ENCODE measurements at regions of chr19 and their contacts with region 1.

Region 1: DNA sequence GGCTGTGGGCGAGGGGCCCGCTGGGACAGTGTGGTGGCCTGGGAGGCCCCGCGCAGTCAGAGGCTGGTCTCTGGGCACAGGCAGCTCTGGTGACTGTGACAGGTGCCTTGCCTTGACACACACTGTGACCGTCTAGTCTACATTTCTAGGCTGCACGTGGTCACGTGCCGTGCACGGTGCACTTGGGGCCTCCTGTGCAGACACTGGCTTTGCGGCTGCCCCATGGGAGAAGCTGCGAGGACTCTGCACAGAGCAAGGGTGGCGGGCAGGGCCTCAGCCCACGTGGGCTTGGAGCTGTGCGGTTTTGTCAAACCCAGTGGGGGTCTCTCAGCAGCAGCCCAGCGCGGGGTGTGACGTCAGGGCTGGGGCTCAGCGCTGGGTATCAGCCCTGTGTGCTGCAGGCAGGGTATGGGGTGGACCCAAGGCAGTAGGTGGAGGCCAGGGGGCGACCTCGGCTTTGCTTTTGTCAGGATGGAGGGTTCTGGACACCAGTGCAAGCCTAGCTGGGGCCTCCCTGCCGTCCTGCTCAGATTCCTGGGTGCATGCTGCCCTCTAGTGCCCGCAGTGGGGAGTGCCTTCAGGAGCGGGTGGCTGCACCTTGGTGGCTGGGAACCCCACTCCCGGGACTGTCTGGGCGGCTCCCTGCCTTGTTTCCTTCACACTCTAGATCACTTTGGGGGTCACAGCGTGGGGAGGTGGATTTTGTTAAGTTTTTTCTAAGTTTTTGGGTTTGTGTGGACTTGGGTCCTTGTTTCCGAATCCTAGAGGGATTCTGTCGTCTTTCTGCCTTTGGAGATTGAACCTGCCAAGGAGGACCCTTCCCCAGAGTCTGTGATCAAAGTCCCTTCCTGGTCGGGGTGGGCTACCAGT is 62.6 kb downstream of the KDM4B start:
- DNase-seq: peak; percentile 58 to 86 (median 74)
- ATAC-seq: peak; percentile 91
- H3K4me3 ChIP-seq: no peak overlapping the region
- H3K4me3 Mint-ChIP-seq: no peak overlapping the region
- H3K27ac ChIP-seq: no peak overlapping the region
- H3K27ac Mint-ChIP-seq: peak overlapping the region in 1 of 9 donors; percentile 49
- H3K4me1 ChIP-seq: no peaks in the 10 kb centered on the region
- H3K4me1 Mint-ChIP-seq: peaks cover 0 to 14% (median 12%) of the 10 kb centered on the region in 7 donors
- H3K27me3 ChIP-seq: no peaks in the 10 kb centered on the region
- H3K27me3 Mint-ChIP-seq: no peaks in the 10 kb centered on the region

Region 2: DNA sequence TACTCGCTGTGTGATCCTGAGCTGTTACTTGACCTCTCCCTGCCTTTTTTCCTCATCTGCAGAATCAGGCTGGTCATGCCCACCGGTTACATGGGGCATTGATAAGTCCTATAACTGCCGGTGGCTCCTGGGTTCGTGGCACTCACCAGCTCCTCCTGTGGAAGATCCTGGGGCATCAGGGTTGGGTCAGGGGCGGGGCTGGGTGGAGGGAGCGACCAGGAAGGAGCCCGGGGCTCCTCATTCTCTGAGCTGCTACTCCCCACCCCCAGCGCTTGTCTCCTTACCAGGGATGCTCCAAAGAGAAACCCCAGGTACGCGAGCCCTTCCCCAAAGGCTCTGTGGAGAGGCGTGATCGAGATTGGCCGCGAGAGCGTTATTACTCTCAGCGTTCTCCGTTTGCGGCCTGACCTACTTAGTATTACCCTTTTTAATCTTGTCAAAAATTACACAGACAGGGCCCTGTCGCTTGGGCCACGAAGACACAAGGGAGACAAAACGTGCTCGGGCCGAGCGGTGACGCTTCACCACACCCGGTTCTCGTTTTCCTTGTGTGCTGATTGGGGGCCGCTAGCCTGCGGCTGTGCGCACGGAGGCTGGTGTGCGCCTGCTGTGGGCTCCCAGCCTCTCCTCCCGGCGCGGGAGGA is 548.6 kb before region 1 on chr19:
- CTCF ChIA-PET with region 1: no interaction called
- POLR2A ChIA-PET with region 1: no interaction called
- intact Hi-C with region 1: no loop called
- DNase-seq: no peak
- ATAC-seq: no peak
- H3K4me3 ChIP-seq: no peak overlapping the region
- H3K4me3 Mint-ChIP-seq: no peak overlapping the region
- H3K27ac ChIP-seq: no peak overlapping the region
- H3K27ac Mint-ChIP-seq: no peak overlapping the region
- H3K4me1 ChIP-seq: no peaks in the 10 kb centered on the region
- H3K4me1 Mint-ChIP-seq: peaks cover 0 to 3% (median 0%) of the 10 kb centered on the region in 7 donors
- H3K27me3 ChIP-seq: no peaks in the 10 kb centered on the region
- H3K27me3 Mint-ChIP-seq: no peaks in the 10 kb centered on the region

Region 3: DNA sequence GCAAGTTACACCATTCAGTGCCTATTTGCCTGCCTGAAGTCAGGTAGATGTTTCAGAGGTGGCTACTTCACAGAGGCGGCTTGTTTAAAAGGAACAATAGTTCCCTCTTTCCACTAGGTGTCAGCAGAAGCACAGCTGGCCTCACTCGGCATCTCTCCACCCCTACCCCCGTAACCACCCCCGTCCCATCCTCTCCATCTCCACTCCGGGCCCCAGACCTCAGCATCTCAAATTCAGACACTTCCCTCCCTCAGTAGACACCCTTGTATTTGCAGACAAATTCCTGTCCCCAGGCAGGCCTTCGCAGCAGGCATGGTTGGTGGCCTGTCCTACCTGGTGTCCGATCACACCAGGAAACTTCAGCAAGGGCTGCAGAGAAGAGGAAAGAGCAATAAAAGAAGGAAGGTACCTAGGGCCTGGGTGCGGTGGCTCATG is 298.8 kb before region 1 on chr19:
- CTCF ChIA-PET with region 1: no interaction called
- POLR2A ChIA-PET with region 1: no interaction called
- intact Hi-C with region 1: loop called in 1 of 2 experiments (anchors 2 kb)
- DNase-seq: peak in 8 of 9 donors; percentile 38 to 66 (median 54)
- ATAC-seq: peak; percentile 95
- H3K4me3 ChIP-seq: peak overlapping the region; percentile 24
- H3K4me3 Mint-ChIP-seq: peak overlapping the region in 6 of 10 donors; percentile 2 to 77 (median 35)
- H3K27ac ChIP-seq: no peak overlapping the region
- H3K27ac Mint-ChIP-seq: peak overlapping the region in 4 of 9 donors; percentile 1 to 78 (median 52)
- H3K4me1 ChIP-seq: peaks cover 3 to 4% of the 10 kb centered on the region in 2 donors
- H3K4me1 Mint-ChIP-seq: peaks cover 4 to 11% (median 6%) of the 10 kb centered on the region in 7 donors
- H3K27me3 ChIP-seq: no peaks in the 10 kb centered on the region
- H3K27me3 Mint-ChIP-seq: peaks cover 0 to 14% (median 5%) of the 10 kb centered on the region in 5 donors

Region 4: DNA sequence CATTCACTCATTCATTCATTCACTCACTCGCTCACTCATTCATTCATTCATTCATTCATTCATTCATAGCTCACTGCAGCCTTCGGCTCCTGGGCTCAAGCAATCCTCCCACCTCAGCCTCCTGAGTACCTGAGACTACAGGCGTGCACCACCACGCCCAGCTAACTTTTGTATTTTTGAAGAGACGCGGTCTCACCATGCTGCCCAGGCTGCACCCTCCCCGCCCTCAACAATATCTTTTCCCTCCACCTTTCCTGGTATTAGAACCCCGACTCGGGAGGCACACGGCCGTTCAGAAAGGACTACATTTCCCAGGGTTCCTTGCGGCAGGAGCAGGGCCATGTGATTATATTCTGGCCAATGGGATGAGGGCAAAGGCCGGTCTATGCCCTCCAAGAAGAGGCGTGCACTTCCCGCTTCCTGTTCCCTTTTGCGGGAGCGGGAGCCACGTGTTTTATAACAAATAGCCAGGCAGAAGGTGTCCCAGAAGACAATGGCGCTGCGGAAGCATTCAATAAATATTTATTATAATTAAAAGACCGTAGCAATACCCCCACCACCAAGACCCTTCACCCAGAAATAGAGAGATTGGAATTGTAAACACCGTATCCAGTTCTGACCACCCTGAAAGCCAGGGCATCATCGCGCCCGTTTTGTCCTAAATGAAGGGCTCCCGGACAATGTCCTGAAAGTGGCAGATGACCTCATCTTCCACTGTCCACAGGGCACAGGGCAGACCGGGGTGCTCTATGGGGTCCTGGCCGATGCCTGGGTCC is 215.9 kb before region 1 on chr19:
- CTCF ChIA-PET with region 1: interaction called, 23 read pairs
- POLR2A ChIA-PET with region 1: no interaction called
- intact Hi-C with region 1: loop called (anchors 1 to 2 kb)
- DNase-seq: peak; percentile 43 to 77 (median 67)
- ATAC-seq: peak; percentile 86
- H3K4me3 ChIP-seq: peak overlapping the region; percentile 40
- H3K4me3 Mint-ChIP-seq: peak overlapping the region; percentile 68 to 88 (median 81)
- H3K27ac ChIP-seq: peak overlapping the region; percentile 48
- H3K27ac Mint-ChIP-seq: peak overlapping the region; percentile 26 to 91 (median 87)
- H3K4me1 ChIP-seq: peaks cover 4 to 14% of the 10 kb centered on the region in 2 donors
- H3K4me1 Mint-ChIP-seq: peaks cover 11 to 29% (median 18%) of the 10 kb centered on the region in 7 donors
- H3K27me3 ChIP-seq: no peaks in the 10 kb centered on the region
- H3K27me3 Mint-ChIP-seq: no peaks in the 10 kb centered on the region

Region 5: GRCh38 chr19:4867534-4868285 is 163.8 kb before region 1 on chr19 and contains the start of gene PLIN3:
- CTCF ChIA-PET with region 1: interaction called, 32 read pairs
- POLR2A ChIA-PET with region 1: no interaction called
- intact Hi-C with region 1: loop called (anchors 1 kb)
- DNase-seq: peak; percentile 61 to 96 (median 79)
- ATAC-seq: peak; percentile 96
- H3K4me3 ChIP-seq: peak within 1 kb of the TSS; percentile 76
- H3K4me3 Mint-ChIP-seq: peak within 1 kb of the TSS; percentile 76 to 88 (median 84)
- H3K27ac ChIP-seq: peak within 1 kb of the TSS; percentile 70
- H3K27ac Mint-ChIP-seq: peak within 1 kb of the TSS; percentile 68 to 86 (median 75)
- H3K4me1 ChIP-seq: peaks cover 4 to 6% of the 10 kb centered on the region in 2 donors
- H3K4me1 Mint-ChIP-seq: peaks cover 5 to 25% (median 10%) of the 10 kb centered on the region in 7 donors
- H3K27me3 ChIP-seq: no peaks in the 10 kb centered on the region
- H3K27me3 Mint-ChIP-seq: no peaks in the 10 kb centered on the region
- total RNA-seq, gene PLIN3: 12.8 to 38.2 (median 32.0) TPM

Measured in naive thymus-derived CD4-positive, alpha-beta T cell (primary cell).